T-cell (primary cell): ENCODE measurements at regions of chr2 and their contacts with region 1.

Region 1: GRCh38 chr2:39080152-39080551 is 40.7 kb downstream of the SOS1 start:
- DNase-seq: no peak
- ATAC-seq: no peak
- H3K4me3 ChIP-seq: no peak overlapping the region
- H3K4me3 Mint-ChIP-seq: no peak overlapping the region
- H3K27ac ChIP-seq: no peak overlapping the region
- H3K27ac Mint-ChIP-seq: no peak overlapping the region
- H3K4me1 ChIP-seq: peaks cover 0 to 10% of the 10 kb centered on the region in 2 experiments
- H3K4me1 Mint-ChIP-seq: peaks cover 43 to 57% (median 43%) of the 10 kb centered on the region in 3 donors
- H3K27me3 ChIP-seq: no peaks in the 10 kb centered on the region
- H3K27me3 Mint-ChIP-seq: no peaks in the 10 kb centered on the region

Region 2: DNA sequence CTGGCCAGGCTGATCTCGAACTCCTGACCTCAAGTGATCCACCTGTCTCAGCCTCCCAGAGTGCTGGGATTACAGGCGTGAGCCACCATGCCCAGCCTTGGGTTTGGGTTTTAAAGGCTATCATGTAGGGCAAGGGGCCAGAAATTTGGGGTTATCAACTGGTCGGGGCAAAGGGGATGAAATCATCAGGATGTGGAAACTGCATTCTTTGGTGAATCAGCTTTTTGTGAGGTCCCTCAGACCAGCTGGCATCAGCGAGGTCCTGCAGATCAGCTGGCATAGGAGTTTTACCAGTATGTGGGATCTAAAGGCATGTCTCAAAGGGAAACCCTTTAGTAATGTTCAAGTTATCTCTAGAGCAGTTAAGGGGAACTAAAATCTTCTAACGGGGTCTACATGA is 308.5 kb before region 1 on chr2:
- CTCF ChIA-PET with region 1: no interaction called
- POLR2A ChIA-PET with region 1: no interaction called
- DNase-seq: no peak
- ATAC-seq: no peak
- H3K4me3 ChIP-seq: no peak overlapping the region
- H3K4me3 Mint-ChIP-seq: no peak overlapping the region
- H3K27ac ChIP-seq: no peak overlapping the region
- H3K27ac Mint-ChIP-seq: no peak overlapping the region
- H3K4me1 ChIP-seq: no peaks in the 10 kb centered on the region
- H3K4me1 Mint-ChIP-seq: no peaks in the 10 kb centered on the region
- H3K27me3 ChIP-seq: no peaks in the 10 kb centered on the region
- H3K27me3 Mint-ChIP-seq: peaks cover 9 to 15% of the 10 kb centered on the region in 2 donors

Region 3: GRCh38 chr2:39107156-39107555 is 27.0 kb after region 1 on chr2:
- CTCF ChIA-PET with region 1: interaction called in 1 of 2 experiments, 15 read pairs
- POLR2A ChIA-PET with region 1: no interaction called
- DNase-seq: no peak
- ATAC-seq: no peak
- H3K4me3 ChIP-seq: no peak overlapping the region
- H3K4me3 Mint-ChIP-seq: no peak overlapping the region
- H3K27ac ChIP-seq: no peak overlapping the region
- H3K27ac Mint-ChIP-seq: peak overlapping the region; percentile 37 to 38
- H3K4me1 ChIP-seq: peaks cover 2 to 25% of the 10 kb centered on the region in 2 experiments
- H3K4me1 Mint-ChIP-seq: peaks cover 67 to 77% (median 69%) of the 10 kb centered on the region in 3 donors
- H3K27me3 ChIP-seq: no peaks in the 10 kb centered on the region
- H3K27me3 Mint-ChIP-seq: no peaks in the 10 kb centered on the region